ENCODE measurements at regions of chr12 and their contacts with region 1.

Region 1: GRCh38 chr12:104143918-104144317 is 5.9 kb upstream of the NFYB start:
- DNase-seq: no peak
- ATAC-seq: no peak
- H3K4me3 ChIP-seq: no peak overlapping the region
- H3K4me3 Mint-ChIP-seq: no peak overlapping the region
- H3K27ac ChIP-seq: no peak overlapping the region
- H3K27ac Mint-ChIP-seq: no peak overlapping the region
- H3K4me1 ChIP-seq: peaks cover 0 to under 1% of the 10 kb centered on the region in 2 experiments
- H3K4me1 Mint-ChIP-seq: peaks cover 1 to 6% (median 2%) of the 10 kb centered on the region in 3 donors
- H3K27me3 ChIP-seq: peaks cover 0 to 10% of the 10 kb centered on the region in 2 experiments
- H3K27me3 Mint-ChIP-seq: peaks cover 0 to 7% of the 10 kb centered on the region in 2 donors

Region 2: GRCh38 chr12:104079024-104079423 is 64.9 kb before region 1 on chr12:
- CTCF ChIA-PET with region 1: no interaction called
- POLR2A ChIA-PET with region 1: no interaction called
- DNase-seq: no peak
- ATAC-seq: no peak
- H3K4me3 ChIP-seq: no peak overlapping the region
- H3K4me3 Mint-ChIP-seq: no peak overlapping the region
- H3K27ac ChIP-seq: no peak overlapping the region
- H3K27ac Mint-ChIP-seq: no peak overlapping the region
- H3K4me1 ChIP-seq: no peaks in the 10 kb centered on the region
- H3K4me1 Mint-ChIP-seq: peaks cover 23 to 25% (median 25%) of the 10 kb centered on the region in 3 donors
- H3K27me3 ChIP-seq: no peaks in the 10 kb centered on the region
- H3K27me3 Mint-ChIP-seq: no peaks in the 10 kb centered on the region

Region 3: DNA sequence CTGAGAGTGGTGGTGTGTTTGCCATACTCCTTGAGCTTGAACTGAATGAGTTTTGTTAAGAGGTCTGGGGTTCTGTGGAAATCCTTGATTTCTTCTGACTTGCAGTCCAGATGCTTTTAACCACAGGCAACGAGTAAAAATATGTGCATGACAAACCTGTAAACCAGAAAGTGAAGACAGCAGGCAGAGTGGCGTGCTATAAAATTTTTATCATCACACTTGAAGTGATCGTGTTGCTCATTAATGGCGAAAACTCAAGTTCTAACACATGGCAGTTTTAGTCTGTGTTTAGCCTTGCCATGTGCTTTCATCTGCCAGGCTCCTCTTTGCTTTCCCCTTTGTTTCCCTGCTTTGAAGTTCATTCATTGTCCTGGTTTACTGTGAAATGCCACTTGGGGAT is 99.6 kb after region 1 on chr12:
- CTCF ChIA-PET with region 1: no interaction called
- POLR2A ChIA-PET with region 1: no interaction called
- DNase-seq: no peak
- ATAC-seq: no peak
- H3K4me3 ChIP-seq: no peak overlapping the region
- H3K4me3 Mint-ChIP-seq: no peak overlapping the region
- H3K27ac ChIP-seq: no peak overlapping the region
- H3K27ac Mint-ChIP-seq: no peak overlapping the region
- H3K4me1 ChIP-seq: no peaks in the 10 kb centered on the region
- H3K4me1 Mint-ChIP-seq: no peaks in the 10 kb centered on the region
- H3K27me3 ChIP-seq: no peaks in the 10 kb centered on the region
- H3K27me3 Mint-ChIP-seq: peaks cover 4% of the 10 kb centered on the region in 2 donors

Region 4: DNA sequence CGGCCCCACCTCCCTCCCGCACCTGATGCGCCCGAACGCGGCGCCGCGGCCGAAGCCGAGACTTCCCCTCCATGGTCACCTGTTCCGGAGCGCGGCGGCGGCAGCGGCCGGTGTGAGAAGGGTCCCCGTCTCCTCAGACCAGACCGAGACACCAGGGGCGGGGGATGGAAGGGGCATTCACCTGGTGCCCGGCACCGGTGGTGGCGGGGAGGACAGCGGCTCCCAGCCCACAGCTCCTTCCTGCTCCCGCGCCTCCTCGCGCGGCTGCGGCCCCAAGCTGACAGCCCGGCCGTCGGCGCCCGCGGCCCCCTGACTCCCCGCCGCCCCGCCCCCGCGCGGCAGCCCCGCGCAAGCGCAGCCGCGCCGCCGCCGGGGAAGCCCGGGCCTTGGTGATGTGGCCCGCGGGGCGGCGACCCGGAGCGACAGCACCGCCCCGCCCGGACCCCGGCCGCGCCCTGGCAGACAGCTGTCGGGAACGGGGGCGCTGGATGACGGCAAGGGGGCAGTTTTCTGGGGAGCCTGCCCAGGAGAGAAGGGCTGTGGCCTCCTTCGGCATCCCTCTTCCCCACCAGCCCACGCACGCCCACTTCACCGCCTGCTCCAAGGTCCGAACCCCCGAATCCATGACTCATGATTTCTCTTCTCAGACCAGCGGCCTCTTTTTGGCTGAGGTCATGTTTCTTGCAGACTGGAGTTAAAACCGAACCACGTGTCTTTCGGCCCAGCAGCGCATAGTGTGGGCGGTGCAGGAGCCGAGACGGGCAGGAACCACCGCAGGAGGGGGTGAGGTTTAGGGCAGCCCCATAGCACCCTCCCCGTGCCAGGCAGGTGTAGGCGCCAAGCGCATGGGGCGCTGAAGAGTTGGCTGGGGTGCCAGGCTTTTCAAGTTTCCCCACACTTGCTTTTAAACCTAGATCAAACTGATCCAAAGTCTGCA is 814.4 kb after region 1 on chr12 and contains the start of gene SLC41A2:
- CTCF ChIA-PET with region 1: interaction called in 1 of 2 experiments, 10 read pairs
- POLR2A ChIA-PET with region 1: no interaction called
- DNase-seq: peak; percentile 52 to 86 (median 73)
- ATAC-seq: peak; percentile 88 to 92 (median 90)
- H3K4me3 ChIP-seq: peak within 1 kb of the TSS; percentile 86 to 95
- H3K4me3 Mint-ChIP-seq: peak within 1 kb of the TSS; percentile 88 to 95 (median 90)
- H3K27ac ChIP-seq: peak within 1 kb of the TSS; percentile 65
- H3K27ac Mint-ChIP-seq: peak within 1 kb of the TSS; percentile 76 to 83
- H3K4me1 ChIP-seq: peaks cover 7 to 10% of the 10 kb centered on the region in 2 experiments
- H3K4me1 Mint-ChIP-seq: peaks cover 17 to 22% (median 21%) of the 10 kb centered on the region in 3 donors
- H3K27me3 ChIP-seq: peaks cover 0 to 6% of the 10 kb centered on the region in 2 experiments
- H3K27me3 Mint-ChIP-seq: peaks cover 6% of the 10 kb centered on the region in 2 donors
- total RNA-seq, gene SLC41A2: 2.4 to 3.8 (median 3.4) TPM

Measured in T-cell (primary cell).